ENCODE measurements at regions of chr13 and their contacts with region 1.

Region 1: DNA sequence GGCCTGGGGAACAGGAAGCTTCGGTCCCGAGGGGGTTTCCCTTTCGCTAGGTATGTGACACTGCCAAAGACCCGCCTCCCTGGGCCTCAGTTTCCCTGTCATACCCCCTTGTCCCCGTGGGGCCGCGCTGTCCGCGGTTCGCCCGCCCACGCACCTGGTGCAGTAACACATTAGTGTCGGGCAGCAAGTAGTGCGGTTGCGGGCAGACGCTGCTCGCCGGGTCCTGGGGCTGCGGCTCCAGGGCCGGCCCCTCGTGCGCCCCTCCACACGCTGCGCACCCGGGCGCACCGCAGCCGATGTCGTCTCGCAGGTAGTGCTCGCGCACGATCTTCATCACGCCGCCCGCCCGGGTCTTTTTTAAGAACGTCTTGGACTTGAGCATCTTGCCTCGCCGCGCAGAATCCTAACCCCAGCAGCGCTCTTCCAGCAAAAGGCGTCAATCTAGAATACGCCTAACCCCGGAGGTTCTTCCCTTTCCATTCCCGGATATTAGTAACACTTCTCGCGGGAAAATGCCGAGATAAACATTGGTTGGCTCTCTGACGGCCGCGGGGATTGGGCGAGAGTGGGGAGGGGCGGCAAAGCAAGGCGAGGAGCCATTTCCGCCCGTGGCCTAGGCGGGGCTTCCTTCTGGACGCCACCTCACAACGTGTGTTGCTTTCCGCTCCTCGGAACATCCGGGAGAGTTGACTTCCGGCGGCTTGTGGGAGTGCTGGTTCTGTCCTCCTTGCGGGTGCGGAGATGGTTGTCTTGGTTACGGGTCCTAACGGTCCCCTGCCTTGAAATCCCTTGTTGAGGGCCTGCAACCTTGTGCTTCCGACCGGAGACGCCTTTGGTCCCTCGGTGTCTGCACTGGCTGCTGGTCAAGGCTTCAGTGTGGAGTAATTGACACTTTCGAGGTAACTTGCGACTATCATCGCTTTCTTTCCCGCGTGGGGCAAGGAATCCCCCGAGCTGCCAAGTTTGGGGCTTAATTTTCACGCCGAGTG is at the starts of genes DIS3 and PIBF1:
- DNase-seq: peak; percentile 99
- H3K4me3 ChIP-seq: peak within 1 kb of the TSS; percentile 63 to 97 (median 88)
- H3K27ac ChIP-seq: peak within 1 kb of the TSS; percentile 86 to 94 (median 86)
- H3K4me1 ChIP-seq: peaks cover 31 to 52% (median 43%) of the 10 kb centered on the region in 4 donors
- H3K27me3 ChIP-seq: no peaks in the 10 kb centered on the region
- CTCF ChIP-seq: peak in 1 of 3 experiments; percentile 19
- EP300 ChIP-seq: no peak
- POLR2A ChIP-seq: no peak
- total RNA-seq, gene DIS3: 16.9 to 33.0 (median 22.1) TPM
- total RNA-seq, gene PIBF1: 9.9 to 18.9 (median 13.3) TPM

Region 2: DNA sequence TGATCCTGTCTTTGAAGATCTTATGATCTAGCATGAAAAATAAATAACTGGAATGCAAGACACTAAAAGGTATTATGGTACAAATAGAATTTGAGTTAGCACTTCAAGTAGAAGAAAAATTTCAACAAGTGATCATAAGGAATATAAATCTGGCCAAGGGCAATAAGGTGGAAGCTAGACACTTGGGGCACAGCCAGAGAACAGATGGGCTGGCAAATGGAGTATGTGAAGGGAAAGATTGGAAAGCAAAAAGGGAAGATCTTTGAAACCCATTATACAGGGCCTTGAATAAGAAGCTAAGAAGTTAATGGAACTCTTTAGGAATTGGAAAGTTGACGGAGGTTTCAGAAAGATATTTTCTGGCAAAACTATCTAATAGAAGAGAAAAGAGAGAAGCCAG is 115.4 kb before region 1 on chr13:
- intact Hi-C with region 1: no loop called
- DNase-seq: no peak
- H3K4me3 ChIP-seq: no peak overlapping the region
- H3K27ac ChIP-seq: no peak overlapping the region
- H3K4me1 ChIP-seq: no peaks in the 10 kb centered on the region
- H3K27me3 ChIP-seq: no peaks in the 10 kb centered on the region
- CTCF ChIP-seq: no peak
- EP300 ChIP-seq: no peak
- POLR2A ChIP-seq: no peak

Region 3: GRCh38 chr13:72727417-72728289 is 54.1 kb before region 1 on chr13 and contains the starts of genes BORA and MZT1:
- intact Hi-C with region 1: loop called (anchors 5 kb)
- DNase-seq: peak; percentile 99
- H3K4me3 ChIP-seq: peak within 1 kb of the TSS; percentile 62 to 90 (median 74)
- H3K27ac ChIP-seq: peak within 1 kb of the TSS; percentile 64 to 76 (median 69)
- H3K4me1 ChIP-seq: peaks cover 20 to 33% (median 25%) of the 10 kb centered on the region in 4 donors
- H3K27me3 ChIP-seq: no peaks in the 10 kb centered on the region
- CTCF ChIP-seq: no peak
- EP300 ChIP-seq: no peak
- POLR2A ChIP-seq: no peak
- total RNA-seq, gene BORA: 0.83 to 2.3 (median 1.6) TPM
- total RNA-seq, gene MZT1: 5.1 to 8.0 (median 5.8) TPM

Measured in esophagus muscularis mucosa (tissue), 4 donors.